Activated B cell treated with CpG ODN at 0.5 μM for 24 hours (primary cell): ENCODE measurements at regions of chr2 and their contacts with region 1.

Region 1: DNA sequence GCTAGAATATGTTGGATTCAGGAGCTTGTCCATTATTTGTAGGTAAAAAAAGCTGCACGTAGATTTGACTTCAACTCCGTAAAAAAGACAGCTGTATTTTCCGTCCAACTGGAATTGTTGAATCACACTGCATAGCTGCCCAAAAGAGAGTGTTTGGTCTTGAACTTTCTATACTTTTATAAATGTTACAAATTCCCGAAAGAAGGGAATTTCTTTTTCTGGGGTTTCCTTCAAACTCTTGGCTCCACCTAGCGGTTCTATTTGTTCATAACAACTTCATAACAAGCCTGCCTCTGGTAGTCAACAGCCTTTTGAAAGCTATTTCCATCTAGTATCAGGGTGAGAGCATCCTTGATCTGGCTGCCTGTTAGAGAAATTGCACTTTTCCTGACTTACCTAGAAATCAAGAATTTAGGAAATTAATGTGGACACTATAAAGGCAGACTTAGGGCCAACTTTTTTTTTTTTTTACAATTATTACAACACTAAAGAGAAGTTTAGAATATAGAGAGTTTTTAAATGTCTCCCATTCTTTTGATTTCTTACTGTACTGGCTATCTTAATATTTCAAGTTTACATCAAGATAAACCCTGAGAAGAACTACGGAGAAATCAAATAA is 48.1 kb downstream of the TMEM185B start:
- DNase-seq: no peak
- ATAC-seq: no peak
- H3K4me3 Mint-ChIP-seq: no peak overlapping the region
- H3K27ac Mint-ChIP-seq: peak overlapping the region; percentile 47
- H3K4me1 Mint-ChIP-seq: peaks cover 50% of the 10 kb centered on the region
- H3K27me3 Mint-ChIP-seq: no peaks in the 10 kb centered on the region
- CTCF ChIP-seq: peak; percentile 98

Region 2: GRCh38 chr2:118186110-118186857 is 1988.8 kb before region 1 on chr2:
- CTCF ChIA-PET with region 1: no interaction called
- POLR2A ChIA-PET with region 1: no interaction called
- intact Hi-C with region 1: loop called (anchors 5 kb)
- DNase-seq: peak; percentile 81
- ATAC-seq: peak; percentile 95
- H3K4me3 Mint-ChIP-seq: peak overlapping the region; percentile 97
- H3K27ac Mint-ChIP-seq: peak overlapping the region; percentile 98
- H3K4me1 Mint-ChIP-seq: peaks cover 16% of the 10 kb centered on the region
- H3K27me3 Mint-ChIP-seq: peaks cover under 1% of the 10 kb centered on the region
- CTCF ChIP-seq: no peak

Region 3: DNA sequence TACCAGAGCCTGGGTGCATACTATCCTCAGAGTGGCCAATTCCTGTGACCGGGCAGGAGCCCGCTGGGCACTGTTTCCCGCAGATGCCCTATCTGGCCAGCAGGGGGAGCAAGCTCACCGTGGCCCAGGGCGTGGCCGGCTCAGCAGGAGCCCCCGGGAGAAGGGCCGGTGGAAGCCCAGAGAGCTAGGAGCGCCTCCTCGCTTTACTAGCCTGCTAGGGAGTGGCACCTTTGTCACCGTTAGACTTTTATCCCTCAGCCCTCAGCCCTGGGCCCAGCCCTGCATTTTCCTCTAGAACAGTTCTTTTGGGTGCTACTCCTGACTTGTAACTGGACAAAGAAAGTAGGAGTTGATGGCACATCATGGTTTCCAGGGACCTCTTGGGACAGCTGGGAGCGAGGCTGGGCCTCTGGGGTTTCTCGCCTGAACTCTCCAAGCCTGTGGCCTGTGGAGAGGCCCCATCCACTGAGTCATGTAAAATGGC is 472.1 kb before region 1 on chr2:
- CTCF ChIA-PET with region 1: interaction called, 19 read pairs
- POLR2A ChIA-PET with region 1: interaction called, 3 read pairs
- intact Hi-C with region 1: loop called (anchors 1 kb)
- DNase-seq: peak; percentile 52
- ATAC-seq: peak; percentile 97
- H3K4me3 Mint-ChIP-seq: no peak overlapping the region
- H3K27ac Mint-ChIP-seq: no peak overlapping the region
- H3K4me1 Mint-ChIP-seq: peaks cover 2% of the 10 kb centered on the region
- H3K27me3 Mint-ChIP-seq: peaks cover 6% of the 10 kb centered on the region
- CTCF ChIP-seq: peak; percentile 69

Region 4: DNA sequence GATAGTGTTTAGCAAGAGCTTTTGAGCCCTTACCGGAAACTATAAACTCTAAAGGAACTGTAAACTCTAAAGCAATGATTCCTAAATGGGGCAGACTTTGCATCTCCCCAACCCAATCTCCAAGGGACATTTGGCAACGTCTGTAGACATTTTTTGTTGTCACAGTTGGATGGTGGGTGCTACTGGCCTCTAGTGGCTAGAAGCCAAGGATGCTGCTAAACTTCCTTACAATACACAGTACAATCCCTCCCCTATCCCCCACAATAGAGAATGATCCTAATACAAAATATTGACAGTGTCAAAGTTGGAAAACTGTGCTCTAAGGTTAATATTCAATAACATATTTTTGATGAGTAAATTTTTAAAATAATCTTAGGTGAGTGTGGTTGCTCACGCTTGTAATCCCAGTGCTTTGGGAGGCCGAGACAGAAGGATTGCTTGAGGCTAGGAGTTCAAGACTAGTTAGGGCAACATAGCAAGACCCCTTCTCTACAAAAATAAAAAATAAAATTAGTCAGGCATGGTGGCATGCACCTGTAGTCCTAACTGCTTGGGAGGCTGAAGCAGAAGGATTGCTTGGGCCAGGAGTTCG is 348.6 kb before region 1 on chr2:
- CTCF ChIA-PET with region 1: interaction called, 5 read pairs
- POLR2A ChIA-PET with region 1: no interaction called
- intact Hi-C with region 1: loop called (anchors 1 kb)
- DNase-seq: no peak
- ATAC-seq: no peak
- H3K4me3 Mint-ChIP-seq: no peak overlapping the region
- H3K27ac Mint-ChIP-seq: no peak overlapping the region
- H3K4me1 Mint-ChIP-seq: peaks cover 8% of the 10 kb centered on the region
- H3K27me3 Mint-ChIP-seq: no peaks in the 10 kb centered on the region
- CTCF ChIP-seq: no peak

Region 5: GRCh38 chr2:120079647-120080046 is 95.4 kb before region 1 on chr2:
- CTCF ChIA-PET with region 1: no interaction called
- POLR2A ChIA-PET with region 1: no interaction called
- intact Hi-C with region 1: no loop called
- DNase-seq: no peak
- ATAC-seq: no peak
- H3K4me3 Mint-ChIP-seq: no peak overlapping the region
- H3K27ac Mint-ChIP-seq: no peak overlapping the region
- H3K4me1 Mint-ChIP-seq: no peaks in the 10 kb centered on the region
- H3K27me3 Mint-ChIP-seq: no peaks in the 10 kb centered on the region
- CTCF ChIP-seq: no peak

Region 6: DNA sequence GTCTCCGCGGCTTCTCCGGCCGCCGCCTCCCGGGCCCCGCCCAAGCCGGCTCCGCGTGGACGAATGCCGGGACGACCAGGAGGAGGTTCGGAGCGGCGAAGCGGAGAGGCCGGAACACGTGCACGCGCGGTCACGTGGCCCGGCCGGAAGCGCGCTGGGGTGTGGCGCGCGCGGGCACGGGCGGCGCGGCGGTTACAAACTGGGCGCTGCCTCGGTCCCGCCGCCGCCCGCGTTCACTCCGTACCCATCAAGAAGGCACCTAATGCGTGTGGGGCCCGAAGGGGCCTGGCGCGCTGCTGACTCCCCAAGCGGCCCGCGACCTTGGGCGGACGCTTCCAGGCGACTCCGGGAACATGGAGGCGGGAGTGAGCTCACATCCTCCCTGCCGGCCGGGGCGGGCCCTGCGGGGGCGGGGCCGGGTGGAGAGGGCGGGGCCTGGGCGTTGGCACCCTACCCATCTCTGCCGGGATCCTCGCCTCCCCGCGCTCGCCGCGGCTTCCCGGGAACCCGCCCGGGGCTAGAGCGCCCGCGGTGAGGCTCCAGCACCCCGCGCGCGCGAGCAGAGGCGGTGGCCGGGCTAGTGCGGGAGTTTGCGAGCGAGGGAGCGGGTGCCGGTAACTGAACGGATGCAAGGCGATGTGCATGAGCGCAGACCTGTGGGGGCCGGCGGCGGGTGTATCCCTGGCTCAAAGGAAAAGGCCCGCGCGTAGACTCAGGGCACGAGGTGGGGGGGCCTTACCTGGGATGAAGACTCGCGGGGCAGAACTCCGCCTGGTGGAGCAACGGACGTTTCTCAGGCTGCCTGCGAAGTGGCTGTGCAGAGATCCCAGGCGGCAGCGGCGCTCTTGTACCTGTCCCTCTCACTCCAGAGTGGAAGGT is 48.2 kb after region 1 on chr2 and contains the start of gene TMEM185B:
- CTCF ChIA-PET with region 1: interaction called, 3 read pairs
- POLR2A ChIA-PET with region 1: interaction called, 32 read pairs
- intact Hi-C with region 1: loop called (anchors 1 kb)
- DNase-seq: peak; percentile 97
- ATAC-seq: peak; percentile 96
- H3K4me3 Mint-ChIP-seq: peak within 1 kb of the TSS; percentile 87
- H3K27ac Mint-ChIP-seq: peak within 1 kb of the TSS; percentile 90
- H3K4me1 Mint-ChIP-seq: peaks cover 56% of the 10 kb centered on the region
- H3K27me3 Mint-ChIP-seq: no peaks in the 10 kb centered on the region
- CTCF ChIP-seq: no peak
- total RNA-seq, gene TMEM185B: 25.6 and 26.8 TPM in 2 replicates

Region 7: DNA sequence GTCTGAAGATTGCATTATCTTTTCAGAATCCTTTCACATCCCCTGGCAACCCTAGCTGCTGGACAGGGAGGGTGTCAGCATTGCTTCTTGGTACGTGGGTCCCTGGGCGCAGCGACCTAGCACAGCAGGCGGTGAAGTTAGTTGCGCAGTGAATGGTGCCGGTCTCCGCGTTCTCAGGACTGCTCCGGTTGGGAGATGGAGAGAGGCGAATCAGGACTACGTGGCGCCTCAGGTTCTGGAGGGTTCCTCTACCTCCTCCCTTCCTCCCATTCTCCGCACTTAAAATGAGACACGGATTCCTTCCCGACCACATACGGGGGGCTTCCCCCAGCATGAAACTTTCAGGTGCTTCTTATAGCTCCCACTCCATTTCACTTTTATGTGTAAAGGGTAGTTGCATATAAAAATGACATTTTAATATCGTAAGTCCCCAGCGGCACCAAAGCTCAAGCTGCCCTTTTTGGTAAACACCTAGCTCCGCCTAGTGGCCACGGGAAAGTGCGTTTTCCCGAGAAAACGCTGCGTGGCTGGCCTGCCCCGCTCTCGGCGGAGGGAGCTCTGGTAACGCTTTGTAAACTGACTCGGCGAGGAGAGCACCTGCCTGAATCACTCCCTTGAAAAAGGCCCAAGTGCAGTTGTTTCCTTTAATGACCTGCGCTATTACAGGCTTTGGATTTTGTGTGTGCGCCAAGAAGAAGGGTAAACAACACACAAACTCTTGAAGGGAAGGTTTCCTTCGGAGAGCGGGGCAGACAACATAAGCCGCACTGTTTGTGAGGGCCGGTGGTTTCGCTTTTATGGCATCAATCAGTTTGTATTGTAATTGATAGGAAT is 138.0 kb after region 1 on chr2:
- CTCF ChIA-PET with region 1: interaction called, 67 read pairs
- POLR2A ChIA-PET with region 1: interaction called, 12 read pairs
- intact Hi-C with region 1: loop called (anchors 1 kb)
- DNase-seq: peak; percentile 51
- ATAC-seq: peak; percentile 70
- H3K4me3 Mint-ChIP-seq: peak overlapping the region; percentile 84
- H3K27ac Mint-ChIP-seq: no peak overlapping the region
- H3K4me1 Mint-ChIP-seq: peaks cover 13% of the 10 kb centered on the region
- H3K27me3 Mint-ChIP-seq: peaks cover 6% of the 10 kb centered on the region
- CTCF ChIP-seq: no peak